K562 (cell line): ENCODE measurements at regions of chr9 and their contacts with region 1.

Region 1: GRCh38 chr9:129835021-129835871 is at the starts of genes C9orf78 and USP20:
- DNase-seq: peak; percentile 100
- ATAC-seq: peak; percentile 95
- H3K4me3 ChIP-seq: peak within 1 kb of the TSS; percentile 90
- H3K27ac ChIP-seq: peak within 1 kb of the TSS; percentile 80
- H3K4me1 ChIP-seq: peaks cover 45 to 48% of the 10 kb centered on the region in 2 experiments
- H3K27me3 ChIP-seq: no peaks in the 10 kb centered on the region
- CTCF ChIP-seq: peak in 1 of 3 experiments; percentile 9; a peak in 2 of 6 replicates
- EP300 ChIP-seq: peak; percentile 21; the same call in 1 of the 2 replicates
- POLR2A ChIP-seq: peak; percentile 95
- RAD21 ChIP-seq: 0 out of 4 replicates have a peak, but pooled peaks of 1 of the 2 experiments have one; percentile 10
- polyA plus RNA-seq, gene C9orf78: 132 to 266 TPM
- polyA plus RNA-seq, gene USP20: 1.9 to 3.2 TPM

Region 2: DNA sequence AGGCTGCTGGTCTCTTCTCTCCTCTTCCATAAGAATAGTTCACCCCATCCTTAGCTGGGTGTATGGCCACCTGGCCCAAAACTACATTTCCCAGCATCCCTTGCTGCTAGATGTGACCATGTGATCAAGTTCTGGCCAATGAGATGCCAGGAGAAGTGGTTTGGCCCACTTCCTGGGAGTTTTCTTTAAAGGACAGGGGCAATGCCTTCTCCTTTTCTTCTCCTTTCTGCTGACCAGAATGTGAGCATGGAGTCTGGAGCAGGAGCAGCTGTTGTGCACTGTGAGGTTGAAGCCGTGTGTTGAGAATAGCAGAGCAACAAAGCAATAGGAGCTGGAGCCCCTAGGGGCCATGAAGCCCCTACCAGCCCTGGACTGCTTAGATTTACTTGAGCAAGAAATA is 251.1 kb before region 1 on chr9:
- CTCF ChIA-PET with region 1: no interaction called
- POLR2A ChIA-PET with region 1: no interaction called
- in situ Hi-C with region 1: no loop called
- intact Hi-C with region 1: no loop called
- DNase-seq: peak; percentile 90 to 92 (median 91)
- ATAC-seq: peak; percentile 84
- H3K4me3 ChIP-seq: no peak overlapping the region
- H3K27ac ChIP-seq: peak overlapping the region; percentile 51
- H3K4me1 ChIP-seq: peaks cover 26 to 35% of the 10 kb centered on the region in 2 experiments
- H3K27me3 ChIP-seq: no peaks in the 10 kb centered on the region
- CTCF ChIP-seq: no peak
- EP300 ChIP-seq: no peak
- POLR2A ChIP-seq: no peak
- RAD21 ChIP-seq: no peak

Region 3: DNA sequence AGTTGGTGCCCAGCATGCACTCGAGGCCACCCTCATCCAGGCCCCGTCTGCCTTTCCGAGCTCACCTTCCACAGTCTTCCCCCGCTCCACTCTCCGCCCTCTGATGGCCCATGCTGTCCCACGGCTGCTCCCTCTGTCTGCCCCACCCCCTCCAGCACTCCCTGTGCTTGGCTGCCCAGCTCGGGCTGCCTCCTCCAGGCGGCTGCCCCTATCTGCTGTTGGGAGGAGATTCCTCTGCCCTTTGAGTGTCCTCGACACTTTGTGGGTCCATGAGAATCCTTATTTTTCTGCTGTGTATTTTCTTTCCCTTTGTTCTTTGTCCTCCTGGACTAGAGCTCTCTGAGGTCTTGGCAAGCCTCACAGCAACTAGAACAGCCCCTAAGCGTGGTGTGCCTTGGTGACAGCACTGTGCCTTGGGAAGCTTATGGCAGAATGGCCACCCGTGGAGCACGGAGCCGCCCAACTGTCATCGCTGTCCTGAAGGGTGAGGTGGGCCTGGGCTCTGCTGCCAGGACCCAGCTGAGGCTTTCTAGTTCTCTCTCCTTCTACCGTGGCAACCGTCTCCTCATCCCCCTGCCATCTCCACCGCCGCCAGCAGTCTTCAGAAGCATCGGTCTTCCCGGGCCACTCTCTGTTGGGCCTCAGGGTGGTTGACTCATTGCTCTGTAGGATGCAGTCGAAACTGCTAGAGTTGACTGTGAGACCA is 204.1 kb before region 1 on chr9:
- CTCF ChIA-PET with region 1: no interaction called
- POLR2A ChIA-PET with region 1: no interaction called
- in situ Hi-C with region 1: no loop called
- intact Hi-C with region 1: no loop called
- DNase-seq: no peak
- ATAC-seq: no peak
- H3K4me3 ChIP-seq: no peak overlapping the region
- H3K27ac ChIP-seq: no peak overlapping the region
- H3K4me1 ChIP-seq: peaks cover 24 to 47% of the 10 kb centered on the region in 2 experiments; a peak in 4 of 5 replicates
- H3K27me3 ChIP-seq: no peaks in the 10 kb centered on the region
- CTCF ChIP-seq: no peak
- EP300 ChIP-seq: no peak
- POLR2A ChIP-seq: no peak
- RAD21 ChIP-seq: no peak

Region 4: GRCh38 chr9:129823935-129824601 is 11.2 kb before region 1 on chr9 and contains the start of gene TOR1A:
- CTCF ChIA-PET with region 1: no interaction called
- POLR2A ChIA-PET with region 1: interaction called, 13 read pairs
- in situ Hi-C with region 1: no loop called
- intact Hi-C with region 1: loop called (anchors 1 kb)
- DNase-seq: peak; percentile 95 to 99 (median 96)
- ATAC-seq: peak; percentile 95
- H3K4me3 ChIP-seq: peak within 1 kb of the TSS; percentile 88
- H3K27ac ChIP-seq: peak within 1 kb of the TSS; percentile 83
- H3K4me1 ChIP-seq: peaks cover 12 to 13% of the 10 kb centered on the region in 2 experiments; a peak in 4 of 5 replicates
- H3K27me3 ChIP-seq: no peaks in the 10 kb centered on the region
- CTCF ChIP-seq: no peak; a peak in 1 of 6 replicates
- EP300 ChIP-seq: peak; percentile 44
- POLR2A ChIP-seq: peak; percentile 96
- RAD21 ChIP-seq: no peak; a peak in 2 of 4 replicates
- polyA plus RNA-seq, gene TOR1A: 4.5 to 9.9 TPM

Region 5: GRCh38 chr9:129845373-129845772 is 10.1 kb after region 1 on chr9:
- CTCF ChIA-PET with region 1: no interaction called
- POLR2A ChIA-PET with region 1: interaction called, 39 read pairs
- in situ Hi-C with region 1: no loop called
- intact Hi-C with region 1: no loop called
- DNase-seq: no peak
- ATAC-seq: no peak
- H3K4me3 ChIP-seq: no peak overlapping the region
- H3K27ac ChIP-seq: peak overlapping the region; percentile 23; the same call in 1 of the 3 replicates
- H3K4me1 ChIP-seq: peaks cover 0 to 14% of the 10 kb centered on the region in 2 experiments; a peak in 3 of 5 replicates
- H3K27me3 ChIP-seq: no peaks in the 10 kb centered on the region
- CTCF ChIP-seq: no peak
- EP300 ChIP-seq: no peak
- POLR2A ChIP-seq: no peak
- RAD21 ChIP-seq: no peak

Region 6: DNA sequence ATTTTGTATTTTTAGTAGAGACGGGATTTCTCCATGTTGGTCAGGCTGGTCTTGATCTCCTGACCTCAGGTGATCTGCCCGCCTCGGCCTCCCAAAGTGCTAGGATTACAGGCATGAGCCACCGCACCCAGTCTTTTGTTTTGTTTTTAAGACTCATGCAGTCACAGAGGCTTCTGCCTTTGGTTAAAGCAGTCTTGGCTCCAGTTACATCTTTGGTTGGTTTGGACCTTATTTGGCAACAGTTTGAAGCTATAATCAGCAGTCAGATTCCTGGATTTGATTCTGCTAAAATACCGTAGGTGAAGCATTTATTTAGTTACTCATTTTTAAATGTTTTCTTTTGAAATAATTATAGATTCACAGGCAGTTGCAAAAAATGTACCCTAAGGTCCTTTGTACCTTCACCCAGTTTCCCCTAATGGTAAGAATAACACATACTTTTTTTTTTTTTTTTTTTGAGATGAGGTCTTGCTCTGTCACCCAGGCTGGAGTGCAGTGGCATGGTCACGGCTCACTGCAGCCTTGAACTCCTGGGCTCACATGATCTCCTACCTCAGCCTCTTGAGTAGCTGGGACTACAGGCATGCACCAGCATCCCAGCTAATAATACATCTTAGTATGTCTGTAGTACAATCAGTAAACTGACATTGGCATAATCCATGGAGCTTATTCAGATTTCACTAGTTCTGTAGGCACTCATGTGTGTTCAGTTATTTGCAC is 15.7 kb after region 1 on chr9:
- CTCF ChIA-PET with region 1: no interaction called
- POLR2A ChIA-PET with region 1: interaction called, 39 read pairs
- in situ Hi-C with region 1: no loop called
- intact Hi-C with region 1: no loop called
- DNase-seq: no peak
- ATAC-seq: no peak
- H3K4me3 ChIP-seq: no peak overlapping the region
- H3K27ac ChIP-seq: no peak overlapping the region
- H3K4me1 ChIP-seq: peaks cover 0 to 4% of the 10 kb centered on the region in 2 experiments; a peak in 2 of 5 replicates
- H3K27me3 ChIP-seq: no peaks in the 10 kb centered on the region
- CTCF ChIP-seq: no peak
- EP300 ChIP-seq: no peak
- POLR2A ChIP-seq: no peak
- RAD21 ChIP-seq: no peak

Region 7: DNA sequence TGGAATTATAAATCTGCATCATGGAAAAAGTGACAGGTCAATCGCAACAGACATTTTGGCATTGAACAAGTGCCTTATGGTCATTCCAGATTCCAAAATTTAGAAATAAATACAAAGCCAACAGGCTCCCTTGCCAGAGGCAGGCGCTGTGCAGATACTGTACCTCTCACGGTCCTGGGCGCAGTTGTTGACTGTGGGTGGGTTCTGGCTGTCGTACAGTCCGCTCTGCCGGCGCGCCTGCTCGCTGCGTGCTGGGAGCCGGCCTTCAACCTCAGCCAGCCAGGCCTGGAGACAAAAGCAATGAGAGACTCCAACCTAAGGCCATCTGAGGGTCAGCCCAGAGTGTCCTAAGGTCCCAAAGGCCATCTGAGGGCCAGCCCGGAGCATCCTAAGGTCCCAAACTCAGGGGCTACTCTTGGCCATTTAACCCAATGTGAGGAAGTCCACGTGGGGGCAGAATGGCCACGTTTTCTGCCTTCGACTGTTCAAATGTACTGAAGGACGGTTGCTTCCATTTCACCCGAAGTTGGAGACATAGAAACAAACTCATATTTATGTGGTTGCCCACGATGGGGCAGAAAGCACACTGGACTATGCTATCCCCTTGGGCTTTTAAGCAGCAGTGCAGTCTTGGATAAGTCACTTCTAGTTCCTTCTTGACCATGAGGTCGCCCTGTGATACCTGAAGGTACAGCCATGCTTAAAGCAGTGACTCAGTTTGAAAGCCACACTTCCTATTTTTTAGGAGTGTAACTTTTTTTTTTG is 65.2 kb after region 1 on chr9:
- CTCF ChIA-PET with region 1: no interaction called
- POLR2A ChIA-PET with region 1: no interaction called
- in situ Hi-C with region 1: no loop called
- intact Hi-C with region 1: no loop called
- DNase-seq: peak in 1 of 4 experiments; percentile 49
- ATAC-seq: peak; percentile 60
- H3K4me3 ChIP-seq: no peak overlapping the region
- H3K27ac ChIP-seq: no peak overlapping the region
- H3K4me1 ChIP-seq: peaks cover 5 to 6% of the 10 kb centered on the region in 2 experiments; a peak in 4 of 5 replicates
- H3K27me3 ChIP-seq: no peaks in the 10 kb centered on the region
- CTCF ChIP-seq: peak; percentile 24 to 51 (median 40); a peak in 5 of 6 replicates
- EP300 ChIP-seq: no peak
- POLR2A ChIP-seq: no peak
- RAD21 ChIP-seq: peak in 1 of 2 experiments; percentile 66; a peak in 2 of 4 replicates